ENCODE measurements at regions of chr15 and their contacts with region 1.

Region 1: GRCh38 chr15:95291898-95292472 is 1038.5 kb upstream of the NR2F2 start:
- DNase-seq: no peak
- ATAC-seq: no peak
- H3K4me3 Mint-ChIP-seq: no peak overlapping the region
- H3K27ac Mint-ChIP-seq: no peak overlapping the region
- H3K4me1 Mint-ChIP-seq: no peaks in the 10 kb centered on the region
- H3K27me3 Mint-ChIP-seq: peaks cover 2% of the 10 kb centered on the region
- CTCF ChIP-seq: no peak

Region 2: DNA sequence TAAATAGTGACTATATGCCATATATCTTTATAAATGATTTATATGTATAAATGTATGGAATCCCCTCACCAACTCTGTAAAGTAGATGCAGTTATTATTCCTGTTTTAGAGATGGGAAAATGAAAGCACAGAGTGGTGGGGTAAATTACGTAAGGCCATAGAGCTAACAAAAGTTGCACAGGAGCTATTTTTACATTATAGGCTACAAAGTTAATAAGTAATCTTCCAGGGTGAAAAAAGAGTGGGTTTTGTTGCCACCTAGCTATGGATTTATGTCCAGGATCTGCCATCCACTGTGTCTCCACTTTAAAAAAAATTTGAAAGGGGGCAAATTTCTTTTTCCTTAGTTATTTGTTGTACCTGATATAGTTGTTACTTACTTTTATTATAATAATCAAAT is 825.0 kb before region 1 on chr15:
- CTCF ChIA-PET with region 1: no interaction called
- POLR2A ChIA-PET with region 1: no interaction called
- intact Hi-C with region 1: no loop called
- DNase-seq: no peak
- ATAC-seq: no peak
- H3K4me3 Mint-ChIP-seq: no peak overlapping the region
- H3K27ac Mint-ChIP-seq: no peak overlapping the region
- H3K4me1 Mint-ChIP-seq: no peaks in the 10 kb centered on the region
- H3K27me3 Mint-ChIP-seq: no peaks in the 10 kb centered on the region
- CTCF ChIP-seq: no peak

Region 3: DNA sequence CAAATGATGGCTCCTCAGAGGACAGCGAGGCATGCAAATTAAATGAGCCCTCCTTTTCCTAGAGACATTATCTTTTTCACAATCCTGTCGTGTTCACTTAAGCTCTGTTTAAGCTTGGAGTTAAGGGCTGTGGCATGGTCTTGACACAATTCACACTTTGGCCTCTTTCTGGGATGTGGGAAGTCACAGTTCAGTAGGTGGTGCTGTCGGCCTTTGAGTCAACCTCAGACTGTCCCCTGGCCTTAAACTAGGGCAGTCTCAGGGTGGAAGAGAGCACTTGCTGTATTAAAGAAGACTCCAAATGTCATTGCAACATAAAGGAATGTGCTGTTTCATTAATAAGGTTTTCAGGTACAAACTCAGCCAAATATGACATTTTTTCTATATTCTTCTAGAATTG is 709.6 kb before region 1 on chr15:
- CTCF ChIA-PET with region 1: no interaction called
- POLR2A ChIA-PET with region 1: no interaction called
- intact Hi-C with region 1: loop called (anchors 5 kb)
- DNase-seq: no peak
- ATAC-seq: no peak
- H3K4me3 Mint-ChIP-seq: no peak overlapping the region
- H3K27ac Mint-ChIP-seq: no peak overlapping the region
- H3K4me1 Mint-ChIP-seq: peaks cover 10% of the 10 kb centered on the region
- H3K27me3 Mint-ChIP-seq: peaks cover 53% of the 10 kb centered on the region
- CTCF ChIP-seq: no peak

Region 4: DNA sequence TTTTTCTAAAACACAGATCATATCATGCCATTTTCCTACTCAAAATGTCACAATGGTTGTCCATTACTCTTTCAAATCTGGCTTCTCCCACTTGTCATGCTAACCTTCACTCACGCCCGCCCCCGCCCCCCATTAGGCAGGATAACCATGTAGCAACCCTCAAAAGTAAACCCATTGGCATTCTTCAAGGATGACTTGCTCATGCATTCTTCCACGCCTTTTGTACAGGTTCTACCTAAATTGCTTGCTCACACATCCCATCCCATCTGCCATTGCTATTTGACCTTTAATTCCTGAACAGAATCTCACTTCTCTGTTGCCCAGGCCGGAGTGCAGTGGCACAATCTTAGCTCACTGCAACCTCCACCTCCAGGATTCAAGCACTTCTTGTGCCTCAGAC is 671.4 kb before region 1 on chr15:
- CTCF ChIA-PET with region 1: no interaction called
- POLR2A ChIA-PET with region 1: no interaction called
- intact Hi-C with region 1: no loop called
- DNase-seq: no peak
- ATAC-seq: no peak
- H3K4me3 Mint-ChIP-seq: no peak overlapping the region
- H3K27ac Mint-ChIP-seq: no peak overlapping the region
- H3K4me1 Mint-ChIP-seq: no peaks in the 10 kb centered on the region
- H3K27me3 Mint-ChIP-seq: no peaks in the 10 kb centered on the region
- CTCF ChIP-seq: no peak

Region 5: GRCh38 chr15:95235033-95235432 is 57.0 kb before region 1 on chr15:
- CTCF ChIA-PET with region 1: no interaction called
- POLR2A ChIA-PET with region 1: no interaction called
- intact Hi-C with region 1: no loop called
- DNase-seq: no peak
- ATAC-seq: no peak
- H3K4me3 Mint-ChIP-seq: no peak overlapping the region
- H3K27ac Mint-ChIP-seq: no peak overlapping the region
- H3K4me1 Mint-ChIP-seq: no peaks in the 10 kb centered on the region
- H3K27me3 Mint-ChIP-seq: no peaks in the 10 kb centered on the region
- CTCF ChIP-seq: no peak

Region 6: GRCh38 chr15:95277266-95277665 is 14.7 kb before region 1 on chr15:
- CTCF ChIA-PET with region 1: no interaction called
- POLR2A ChIA-PET with region 1: no interaction called
- intact Hi-C with region 1: no loop called
- DNase-seq: no peak
- ATAC-seq: no peak
- H3K4me3 Mint-ChIP-seq: no peak overlapping the region
- H3K27ac Mint-ChIP-seq: no peak overlapping the region
- H3K4me1 Mint-ChIP-seq: no peaks in the 10 kb centered on the region
- H3K27me3 Mint-ChIP-seq: no peaks in the 10 kb centered on the region
- CTCF ChIP-seq: no peak